B cell (primary cell): ENCODE measurements at regions of chr19 and their contacts with region 1.

Region 1: DNA sequence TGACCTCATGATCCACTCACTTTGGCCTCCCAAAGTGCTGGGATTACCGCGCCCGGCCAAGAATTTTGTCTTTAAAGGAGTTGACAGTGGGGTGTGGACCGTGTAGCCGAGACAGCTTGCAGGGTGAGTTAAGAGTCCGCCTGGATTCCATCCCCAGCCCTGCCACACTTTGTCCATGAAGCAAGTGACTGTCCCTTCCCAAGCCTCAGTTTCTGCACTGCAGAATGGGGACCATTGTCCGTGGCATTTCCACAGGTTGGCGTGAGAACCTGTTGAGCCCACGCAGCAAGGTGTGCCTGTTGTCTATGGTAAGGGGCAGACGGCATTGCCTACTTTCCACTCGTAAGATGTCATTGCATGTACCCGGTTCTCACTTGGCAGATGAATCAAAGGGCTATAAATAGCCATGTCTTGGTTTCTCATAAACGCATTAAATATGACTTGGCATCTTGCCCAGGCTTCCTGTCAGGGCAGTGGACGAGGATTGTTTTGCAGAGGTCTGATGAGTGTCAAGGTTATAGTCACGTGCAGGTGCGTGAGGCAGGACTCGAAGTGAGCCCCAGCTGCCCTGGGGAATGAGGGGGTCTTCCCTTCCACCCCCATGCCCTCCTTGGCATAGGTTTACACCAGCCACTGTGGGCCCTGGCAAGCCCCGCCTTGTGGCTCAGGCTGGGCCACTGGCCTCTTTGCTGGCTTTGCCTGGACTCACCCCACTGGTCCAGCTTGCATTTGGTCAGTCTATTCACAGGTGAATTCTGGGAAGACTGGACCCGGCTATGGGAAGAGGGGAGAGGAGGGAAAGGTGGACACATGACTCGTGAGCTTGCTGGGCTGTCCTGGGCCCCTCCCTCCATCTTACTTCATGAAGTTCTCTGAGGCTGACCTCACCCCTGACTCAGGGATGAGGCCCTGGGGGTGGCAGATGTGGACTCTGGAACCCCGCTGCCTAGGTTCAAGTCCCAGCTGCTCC is 14.6 kb downstream of the FAM187B start:
- DNase-seq: peak; percentile 95
- ATAC-seq: peak; percentile 65
- H3K4me3 ChIP-seq: peak overlapping the region in 3 of 5 experiments; percentile 4 to 28 (median 25)
- H3K4me3 Mint-ChIP-seq: peak overlapping the region; percentile 81
- H3K27ac ChIP-seq: peak overlapping the region; percentile 93 to 99
- H3K27ac Mint-ChIP-seq: peak overlapping the region; percentile 98
- H3K4me1 ChIP-seq: peaks cover 78 to 81% of the 10 kb centered on the region in 2 donors
- H3K4me1 Mint-ChIP-seq: peaks cover 70% of the 10 kb centered on the region
- H3K27me3 ChIP-seq: no peaks in the 10 kb centered on the region
- H3K27me3 Mint-ChIP-seq: no peaks in the 10 kb centered on the region
- CTCF ChIP-seq: no peak

Region 2: GRCh38 chr19:35114353-35115176 is 99.4 kb before region 1 on chr19:
- CTCF ChIA-PET with region 1: interaction called, 7 read pairs
- POLR2A ChIA-PET with region 1: no interaction called
- intact Hi-C with region 1: loop called (anchors 1 kb)
- DNase-seq: peak; percentile 80
- ATAC-seq: peak; percentile 92
- H3K4me3 ChIP-seq: peak overlapping the region in 1 of 5 experiments; percentile 24
- H3K4me3 Mint-ChIP-seq: peak overlapping the region; percentile 44
- H3K27ac ChIP-seq: no peak overlapping the region
- H3K27ac Mint-ChIP-seq: peak overlapping the region; percentile 46
- H3K4me1 ChIP-seq: peaks cover 7 to 9% of the 10 kb centered on the region in 2 donors
- H3K4me1 Mint-ChIP-seq: peaks cover 8% of the 10 kb centered on the region
- H3K27me3 ChIP-seq: peaks cover 0 to 26% (median 2%) of the 10 kb centered on the region in 4 experiments
- H3K27me3 Mint-ChIP-seq: peaks cover 7% of the 10 kb centered on the region
- CTCF ChIP-seq: peak; percentile 91

Region 3: DNA sequence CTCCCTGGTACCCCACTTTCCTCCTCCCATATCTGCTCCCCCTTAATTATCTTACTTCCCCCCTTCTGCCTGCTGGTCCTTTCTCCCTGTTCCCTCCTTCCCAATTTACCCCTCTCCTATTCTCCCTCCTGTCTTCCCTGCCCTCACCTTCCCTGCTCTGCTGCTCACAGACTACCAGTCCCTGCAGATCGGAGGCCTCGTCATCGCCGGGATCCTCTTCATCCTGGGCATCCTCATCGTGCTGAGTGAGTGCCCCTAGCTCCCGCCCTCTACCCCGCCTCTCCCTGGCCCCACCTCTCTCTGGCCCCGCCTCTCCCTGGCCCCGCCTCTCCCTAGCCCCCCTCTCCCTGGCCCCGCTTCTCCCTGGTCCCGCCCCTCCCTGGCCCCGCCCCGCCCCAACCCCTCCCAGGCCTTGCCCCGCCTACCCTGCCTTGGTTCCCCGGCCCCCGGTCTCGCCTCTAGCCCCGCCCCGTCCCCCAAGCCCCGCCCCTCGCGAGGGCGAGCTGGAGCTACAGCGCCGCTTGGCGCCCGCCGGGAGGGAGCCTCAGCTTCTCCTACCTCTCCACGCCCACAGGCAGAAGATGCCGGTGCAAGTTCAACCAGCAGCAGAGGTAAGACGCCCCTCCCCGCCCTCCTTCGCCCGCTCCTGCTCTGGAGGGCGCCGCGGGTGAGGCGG is 72.8 kb before region 1 on chr19:
- CTCF ChIA-PET with region 1: interaction called, 64 read pairs
- POLR2A ChIA-PET with region 1: interaction called, 9 read pairs
- intact Hi-C with region 1: loop called (anchors 1 kb)
- DNase-seq: peak; percentile 87
- ATAC-seq: peak; percentile 86
- H3K4me3 ChIP-seq: peak overlapping the region in 4 of 5 experiments; percentile 43 to 58 (median 52)
- H3K4me3 Mint-ChIP-seq: peak overlapping the region; percentile 92
- H3K27ac ChIP-seq: no peak overlapping the region
- H3K27ac Mint-ChIP-seq: peak overlapping the region; percentile 88
- H3K4me1 ChIP-seq: peaks cover 25 to 52% of the 10 kb centered on the region in 2 donors
- H3K4me1 Mint-ChIP-seq: peaks cover 46% of the 10 kb centered on the region
- H3K27me3 ChIP-seq: peaks cover 0 to 13% (median 3%) of the 10 kb centered on the region in 4 experiments
- H3K27me3 Mint-ChIP-seq: peaks cover 14% of the 10 kb centered on the region
- CTCF ChIP-seq: peak; percentile 35

Region 4: DNA sequence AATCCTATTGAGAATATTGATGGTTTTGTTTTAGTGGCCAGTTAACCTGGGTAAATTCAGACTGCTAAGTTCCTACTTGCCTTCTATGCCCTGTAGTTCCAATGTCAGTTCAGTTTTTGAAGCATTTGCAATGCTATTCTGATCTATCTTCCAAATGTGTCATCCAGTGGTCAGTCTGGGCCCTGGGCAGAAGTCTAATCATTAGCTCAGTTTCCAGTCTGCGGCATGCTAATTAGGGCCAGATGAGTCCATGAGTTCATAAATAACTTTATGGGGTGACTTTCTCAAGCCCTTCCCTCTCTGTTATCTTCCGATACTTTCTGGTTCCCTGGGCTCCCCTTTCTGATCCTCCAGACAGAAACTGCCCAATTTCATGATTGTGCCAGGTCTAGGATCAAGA is 18.1 kb before region 1 on chr19:
- CTCF ChIA-PET with region 1: interaction called, 25 read pairs
- POLR2A ChIA-PET with region 1: interaction called, 4 read pairs
- intact Hi-C with region 1: no loop called
- DNase-seq: no peak
- ATAC-seq: no peak
- H3K4me3 ChIP-seq: no peak overlapping the region
- H3K4me3 Mint-ChIP-seq: no peak overlapping the region
- H3K27ac ChIP-seq: no peak overlapping the region
- H3K27ac Mint-ChIP-seq: no peak overlapping the region
- H3K4me1 ChIP-seq: no peaks in the 10 kb centered on the region
- H3K4me1 Mint-ChIP-seq: peaks cover 5% of the 10 kb centered on the region
- H3K27me3 ChIP-seq: no peaks in the 10 kb centered on the region
- H3K27me3 Mint-ChIP-seq: no peaks in the 10 kb centered on the region
- CTCF ChIP-seq: no peak

Region 5: DNA sequence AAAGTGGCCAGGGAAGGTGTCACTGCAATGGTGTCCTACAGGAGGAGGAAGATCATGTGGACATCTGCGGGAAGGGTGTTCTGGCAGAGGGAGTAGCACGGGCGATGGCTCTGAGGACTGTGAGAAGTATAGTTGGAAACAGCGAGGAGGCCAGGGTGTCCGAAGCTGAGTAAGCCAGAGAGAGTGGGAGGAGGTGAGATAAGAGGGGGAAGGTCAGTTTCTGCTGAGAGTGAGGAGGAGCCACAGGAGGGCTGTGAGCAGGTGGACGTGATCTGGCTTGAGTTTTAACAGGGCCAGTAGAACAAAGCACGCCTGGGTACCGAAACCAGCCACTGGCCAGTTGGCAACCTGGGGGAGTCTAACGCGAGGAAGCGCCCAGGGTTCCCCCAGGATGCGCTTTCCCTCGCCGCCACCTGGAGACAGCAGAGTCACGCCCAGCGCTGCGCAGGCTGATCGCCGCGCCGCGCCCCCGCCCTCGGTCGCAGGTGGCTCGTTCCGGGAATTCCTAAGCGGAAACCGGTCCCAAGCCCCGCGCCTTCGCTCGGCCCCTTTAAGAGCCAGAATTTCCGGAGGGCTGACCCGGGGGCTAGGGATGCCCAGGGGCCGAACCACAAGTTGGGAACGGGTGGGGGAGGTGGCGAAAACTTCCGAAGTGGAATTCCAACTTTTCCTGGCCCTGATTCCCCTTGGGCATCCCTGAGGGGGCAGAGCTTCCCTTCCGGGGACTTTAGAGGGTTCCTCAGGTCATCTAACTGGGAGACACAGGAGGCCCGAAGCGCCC is 33.8 kb after region 1 on chr19:
- CTCF ChIA-PET with region 1: no interaction called
- POLR2A ChIA-PET with region 1: no interaction called
- intact Hi-C with region 1: loop called (anchors 1 kb)
- DNase-seq: peak; percentile 83
- ATAC-seq: peak; percentile 41
- H3K4me3 ChIP-seq: peak overlapping the region; percentile 30 to 93 (median 76)
- H3K4me3 Mint-ChIP-seq: peak overlapping the region; percentile 89
- H3K27ac ChIP-seq: peak overlapping the region; percentile 77 to 86
- H3K27ac Mint-ChIP-seq: peak overlapping the region; percentile 98
- H3K4me1 ChIP-seq: peaks cover 13 to 30% of the 10 kb centered on the region in 2 donors
- H3K4me1 Mint-ChIP-seq: peaks cover 24% of the 10 kb centered on the region
- H3K27me3 ChIP-seq: peaks cover 0 to 6% (median 0%) of the 10 kb centered on the region in 4 experiments
- H3K27me3 Mint-ChIP-seq: peaks cover 12% of the 10 kb centered on the region
- CTCF ChIP-seq: peak; percentile 72

Region 6: DNA sequence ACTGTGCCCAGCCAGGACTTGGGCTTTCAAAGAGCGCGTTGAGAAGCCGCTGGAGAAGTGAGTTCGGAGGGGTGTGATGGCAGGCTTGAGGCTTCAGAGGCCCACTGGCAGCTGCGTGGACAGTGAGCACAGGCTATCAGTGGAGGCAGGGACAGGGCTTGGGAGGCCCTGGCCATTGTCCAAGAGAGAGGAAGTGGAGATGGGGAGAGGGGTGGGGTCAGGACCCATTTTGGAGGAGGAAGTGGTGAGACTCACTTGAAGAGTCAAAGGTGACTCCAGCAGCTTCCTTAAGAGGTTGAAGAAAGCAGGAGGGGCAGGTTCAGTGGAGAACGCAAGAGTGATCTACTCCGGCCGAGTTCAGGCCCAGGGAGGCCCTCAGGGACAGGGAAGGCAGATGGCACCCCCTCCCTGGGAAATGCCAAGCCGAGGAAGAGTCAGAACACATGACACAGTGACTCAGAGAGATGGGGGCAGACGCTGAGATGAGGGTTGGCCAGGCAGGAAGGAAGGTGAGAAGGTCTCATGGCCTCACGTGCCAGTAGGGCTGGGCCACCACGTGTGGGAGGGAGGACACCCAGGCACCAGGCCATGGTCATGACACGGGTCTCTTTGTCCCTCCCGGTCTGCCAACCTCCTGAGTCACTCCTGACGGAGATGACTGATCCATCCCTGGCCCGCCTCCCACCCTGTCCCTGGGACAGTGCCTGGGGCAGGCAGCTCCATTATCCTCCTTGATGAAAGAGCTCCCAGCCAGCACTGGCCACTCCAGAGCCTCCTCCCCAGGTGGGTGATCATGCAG is 104.9 kb after region 1 on chr19:
- CTCF ChIA-PET with region 1: interaction called, 3 read pairs
- POLR2A ChIA-PET with region 1: interaction called, 4 read pairs
- intact Hi-C with region 1: loop called (anchors 5 kb)
- DNase-seq: peak; percentile 65
- ATAC-seq: peak; percentile 25
- H3K4me3 ChIP-seq: peak overlapping the region in 1 of 5 experiments; percentile 53
- H3K4me3 Mint-ChIP-seq: peak overlapping the region; percentile 75
- H3K27ac ChIP-seq: peak overlapping the region; percentile 94 to 97
- H3K27ac Mint-ChIP-seq: peak overlapping the region; percentile 91
- H3K4me1 ChIP-seq: peaks cover 81 to 97% of the 10 kb centered on the region in 2 donors
- H3K4me1 Mint-ChIP-seq: peaks cover 85% of the 10 kb centered on the region
- H3K27me3 ChIP-seq: no peaks in the 10 kb centered on the region
- H3K27me3 Mint-ChIP-seq: no peaks in the 10 kb centered on the region
- CTCF ChIP-seq: no peak

Region 7: DNA sequence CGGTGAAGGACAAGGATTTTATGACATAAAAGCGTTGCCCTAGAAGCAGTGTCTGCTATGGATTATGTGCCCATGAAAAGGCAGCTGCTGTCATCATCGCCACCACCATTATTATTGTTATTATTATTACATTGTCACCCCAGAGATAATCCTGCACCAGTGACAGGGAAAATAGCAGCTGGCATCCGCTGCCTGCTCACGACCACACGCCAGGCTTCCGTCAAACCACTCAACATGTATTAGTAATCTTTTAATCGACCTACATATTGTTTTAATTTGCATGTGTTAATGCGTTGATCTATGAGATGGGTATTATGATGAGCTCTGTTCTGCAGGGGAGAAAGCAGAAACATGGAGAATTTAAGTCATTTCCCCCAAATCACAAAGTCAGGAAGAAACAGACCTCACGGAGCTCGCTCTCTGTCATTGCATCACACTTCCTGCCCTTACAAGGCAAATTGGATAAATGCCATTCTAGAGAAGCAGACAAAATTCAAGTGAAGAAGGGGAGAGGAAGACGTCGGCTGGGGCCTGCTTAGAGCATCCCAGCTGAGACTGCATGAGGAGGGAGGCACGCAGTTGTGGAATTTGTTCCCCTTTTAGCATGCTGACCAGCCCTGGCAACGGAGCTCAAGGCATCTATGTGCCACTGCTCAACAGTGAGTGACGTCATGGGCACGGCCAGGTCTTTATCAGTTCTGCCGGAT is 144.1 kb after region 1 on chr19 and contains the start of gene FFAR3:
- CTCF ChIA-PET with region 1: no interaction called
- POLR2A ChIA-PET with region 1: no interaction called
- intact Hi-C with region 1: no loop called
- DNase-seq: no peak
- ATAC-seq: no peak
- H3K4me3 ChIP-seq: no peak within 1 kb of the TSS
- H3K4me3 Mint-ChIP-seq: no peak within 1 kb of the TSS
- H3K27ac ChIP-seq: no peak within 1 kb of the TSS
- H3K27ac Mint-ChIP-seq: no peak within 1 kb of the TSS
- H3K4me1 ChIP-seq: peaks cover under 1 to 1% of the 10 kb centered on the region in 2 donors
- H3K4me1 Mint-ChIP-seq: peaks cover 3% of the 10 kb centered on the region
- H3K27me3 ChIP-seq: peaks cover 0 to 10% (median 0%) of the 10 kb centered on the region in 4 experiments
- H3K27me3 Mint-ChIP-seq: peaks cover 20% of the 10 kb centered on the region
- CTCF ChIP-seq: no peak
- total RNA-seq, gene FFAR3: not detected in 2 replicates

Region 8: GRCh38 chr19:36850559-36851442 is 1636.9 kb after region 1 on chr19 and contains the start of gene ZNF345:
- CTCF ChIA-PET with region 1: no interaction called
- POLR2A ChIA-PET with region 1: no interaction called
- intact Hi-C with region 1: no loop called
- DNase-seq: peak; percentile 93
- ATAC-seq: peak; percentile 82
- H3K4me3 ChIP-seq: peak within 1 kb of the TSS; percentile 92 to 100 (median 93)
- H3K4me3 Mint-ChIP-seq: no peak within 1 kb of the TSS
- H3K27ac ChIP-seq: peak within 1 kb of the TSS; percentile 74 to 84
- H3K27ac Mint-ChIP-seq: no peak within 1 kb of the TSS
- H3K4me1 ChIP-seq: peaks cover 16 to 20% of the 10 kb centered on the region in 2 donors
- H3K4me1 Mint-ChIP-seq: peaks cover 5% of the 10 kb centered on the region
- H3K27me3 ChIP-seq: no peaks in the 10 kb centered on the region
- H3K27me3 Mint-ChIP-seq: no peaks in the 10 kb centered on the region
- CTCF ChIP-seq: no peak
- total RNA-seq, gene ZNF345: 17.7 and 19.5 TPM in 2 replicates